Left colon (tissue), 2 donors: ENCODE measurements at regions of chr19 and their contacts with region 1.

Region 1: GRCh38 chr19:15629003-15629880 is 11.5 kb upstream of the CYP4F3 start:
- DNase-seq: peak; percentile 76 to 94
- ATAC-seq: peak; percentile 99

Region 2: GRCh38 chr19:15564534-15565168 is 64.6 kb before region 1 on chr19:
- intact Hi-C with region 1: no loop called
- DNase-seq: no peak
- ATAC-seq: no peak

Region 3: GRCh38 chr19:15672580-15673175 is 43.4 kb after region 1 on chr19 and contains the start of gene CYP4F12:
- intact Hi-C with region 1: no loop called
- DNase-seq: peak; percentile 96
- ATAC-seq: peak; percentile 89
- total RNA-seq, gene CYP4F12: 93.3 to 113 TPM

Region 4: DNA sequence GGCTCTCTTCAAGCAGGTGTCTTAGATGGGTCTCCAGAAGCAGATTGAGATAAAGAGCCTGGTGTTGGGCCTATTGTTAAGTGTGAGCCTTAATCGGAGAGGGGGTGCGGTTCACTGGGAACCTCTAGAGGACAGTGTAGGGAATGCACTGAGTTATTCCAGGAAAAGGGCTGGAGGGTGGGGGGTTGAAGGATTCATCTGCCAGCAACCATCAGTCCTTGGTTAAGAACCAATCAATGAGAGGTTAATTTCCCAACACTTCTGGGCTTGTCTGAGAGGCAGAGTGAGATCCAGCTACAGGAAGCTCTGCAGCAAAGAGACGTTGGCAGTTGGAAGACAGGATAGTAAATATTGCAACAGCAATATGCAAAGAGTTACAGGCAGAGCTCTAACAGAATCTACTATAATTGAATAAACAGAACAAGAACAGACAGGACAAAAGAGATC is 239.9 kb after region 1 on chr19:
- intact Hi-C with region 1: loop called in 1 of 2 experiments (anchors 5 kb)
- DNase-seq: peak in 1 of 2 donors; percentile 31
- ATAC-seq: peak; percentile 94